Posterior vena cava (tissue), 2 donors: ENCODE measurements at regions of chr10 and their contacts with region 1.

Region 1: GRCh38 chr10:13829790-13830189 is 243.0 kb downstream of the PRPF18 start:
- DNase-seq: no peak

Region 2: DNA sequence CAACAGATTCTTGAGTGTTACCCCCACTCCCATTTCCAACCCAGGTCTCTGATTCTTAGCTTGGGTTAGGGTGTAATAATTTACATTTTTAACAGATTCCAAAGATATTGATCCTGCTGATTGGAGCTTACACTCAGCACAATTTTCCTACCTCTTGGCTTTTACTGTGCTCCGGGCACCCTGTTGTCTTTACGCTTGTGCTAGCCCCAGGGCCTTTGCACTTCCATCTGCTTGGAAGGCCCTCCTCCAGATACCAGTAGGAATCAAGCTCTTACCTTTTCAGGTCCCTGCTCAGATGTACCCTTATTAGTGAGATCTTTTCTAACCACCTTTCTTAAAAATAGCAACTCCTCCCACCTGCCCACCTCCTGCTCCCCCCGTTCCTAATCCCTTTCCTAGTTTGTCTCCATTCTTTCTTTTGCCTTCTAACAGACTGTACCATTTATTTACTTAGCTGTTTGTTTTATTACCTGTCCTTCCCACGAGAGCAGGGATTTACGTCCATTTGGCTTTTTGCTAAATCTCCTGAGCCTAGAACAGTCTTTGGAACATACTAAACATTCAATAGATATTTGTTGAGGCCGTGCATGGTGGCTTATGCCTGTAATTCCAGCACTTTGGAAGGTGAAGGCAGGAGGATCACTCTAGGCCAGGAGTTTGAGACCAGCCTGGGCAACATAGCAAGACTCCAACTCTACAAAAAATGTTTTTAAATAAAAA is 73.2 kb after region 1 on chr10:
- intact Hi-C with region 1: loop called in 1 of 2 experiments (anchors 2 kb)
- DNase-seq: no peak